ENCODE measurements at regions of chr4 and their contacts with region 1.

Region 1: GRCh38 chr4:108018040-108018883 is 28.6 kb downstream of the HADH start:
- DNase-seq: peak; percentile 75
- H3K4me3 ChIP-seq: no peak overlapping the region
- H3K27ac ChIP-seq: no peak overlapping the region
- H3K4me1 ChIP-seq: no peaks in the 10 kb centered on the region
- H3K27me3 ChIP-seq: no peaks in the 10 kb centered on the region
- CTCF ChIP-seq: peak; percentile 81
- POLR2A ChIP-seq: no peak

Region 2: GRCh38 chr4:107402291-107402690 is 616.0 kb before region 1 on chr4:
- CTCF ChIA-PET with region 1: no interaction called
- POLR2A ChIA-PET with region 1: no interaction called
- dilution Hi-C with region 1: no loop called
- intact Hi-C with region 1: no loop called
- DNase-seq: no peak
- H3K4me3 ChIP-seq: no peak overlapping the region
- H3K27ac ChIP-seq: no peak overlapping the region
- H3K4me1 ChIP-seq: no peaks in the 10 kb centered on the region
- H3K27me3 ChIP-seq: no peaks in the 10 kb centered on the region
- CTCF ChIP-seq: no peak
- POLR2A ChIP-seq: no peak

Region 3: GRCh38 chr4:108030332-108030731 is 12.1 kb after region 1 on chr4:
- CTCF ChIA-PET with region 1: interaction called, 39 read pairs
- POLR2A ChIA-PET with region 1: no interaction called
- dilution Hi-C with region 1: no loop called
- intact Hi-C with region 1: no loop called
- DNase-seq: peak; percentile 49
- H3K4me3 ChIP-seq: no peak overlapping the region
- H3K27ac ChIP-seq: no peak overlapping the region
- H3K4me1 ChIP-seq: no peaks in the 10 kb centered on the region
- H3K27me3 ChIP-seq: no peaks in the 10 kb centered on the region
- CTCF ChIP-seq: peak; percentile 17 to 55
- POLR2A ChIP-seq: no peak

Region 4: DNA sequence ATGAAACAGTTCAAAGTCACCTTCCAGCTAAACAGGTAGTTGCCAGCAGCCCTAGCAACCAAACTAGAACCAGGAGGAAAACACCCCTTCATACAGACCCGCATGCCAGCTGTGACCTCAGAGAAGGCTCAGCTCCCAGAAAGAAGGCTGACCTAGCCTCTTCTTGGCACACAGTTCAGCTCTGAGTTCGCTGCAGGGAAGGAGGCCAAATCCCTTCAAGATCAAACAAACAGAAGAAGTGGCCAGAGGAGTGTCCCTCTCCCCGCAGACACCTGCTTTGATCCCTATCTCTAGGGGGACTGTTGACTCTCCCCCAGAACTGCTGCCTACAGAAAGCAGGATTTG is 27.4 kb after region 1 on chr4:
- CTCF ChIA-PET with region 1: interaction called, 15 read pairs
- POLR2A ChIA-PET with region 1: no interaction called
- dilution Hi-C with region 1: no loop called
- intact Hi-C with region 1: no loop called
- DNase-seq: no peak
- H3K4me3 ChIP-seq: no peak overlapping the region
- H3K27ac ChIP-seq: no peak overlapping the region
- H3K4me1 ChIP-seq: peaks cover 5% of the 10 kb centered on the region
- H3K27me3 ChIP-seq: peaks cover 0 to 2% of the 10 kb centered on the region in 2 experiments
- CTCF ChIP-seq: no peak
- POLR2A ChIP-seq: no peak

Region 5: DNA sequence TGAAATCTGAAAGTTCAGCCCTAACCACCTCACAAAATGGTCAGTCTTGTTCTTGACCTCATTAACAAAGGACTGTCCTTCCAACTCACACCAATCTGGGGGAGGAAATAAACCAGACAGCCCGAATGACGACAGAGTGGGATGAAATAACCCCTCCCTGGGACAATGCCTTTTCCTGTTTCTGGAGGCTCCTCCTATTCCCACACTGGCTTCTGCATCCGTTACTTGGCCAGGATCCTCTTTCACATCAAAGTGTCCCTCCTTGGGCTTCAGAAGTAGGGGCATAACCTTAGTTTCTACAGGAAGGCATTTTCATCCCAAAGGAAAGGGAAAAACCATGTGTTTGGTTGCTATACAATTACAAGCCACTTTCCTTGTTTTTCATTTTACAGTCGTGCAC is 542.4 kb after region 1 on chr4:
- CTCF ChIA-PET with region 1: interaction called, 16 read pairs
- POLR2A ChIA-PET with region 1: no interaction called
- dilution Hi-C with region 1: no loop called
- intact Hi-C with region 1: no loop called
- DNase-seq: peak; percentile 38
- H3K4me3 ChIP-seq: no peak overlapping the region
- H3K27ac ChIP-seq: no peak overlapping the region
- H3K4me1 ChIP-seq: no peaks in the 10 kb centered on the region
- H3K27me3 ChIP-seq: peaks cover 0 to 3% of the 10 kb centered on the region in 2 experiments
- CTCF ChIP-seq: no peak
- POLR2A ChIP-seq: no peak

Region 6: GRCh38 chr4:108581083-108581482 is 562.8 kb after region 1 on chr4:
- CTCF ChIA-PET with region 1: interaction called, 10 read pairs
- POLR2A ChIA-PET with region 1: no interaction called
- dilution Hi-C with region 1: no loop called
- intact Hi-C with region 1: no loop called
- DNase-seq: no peak
- H3K4me3 ChIP-seq: no peak overlapping the region
- H3K27ac ChIP-seq: no peak overlapping the region
- H3K4me1 ChIP-seq: no peaks in the 10 kb centered on the region
- H3K27me3 ChIP-seq: no peaks in the 10 kb centered on the region
- CTCF ChIP-seq: no peak
- POLR2A ChIP-seq: no peak

Region 7: DNA sequence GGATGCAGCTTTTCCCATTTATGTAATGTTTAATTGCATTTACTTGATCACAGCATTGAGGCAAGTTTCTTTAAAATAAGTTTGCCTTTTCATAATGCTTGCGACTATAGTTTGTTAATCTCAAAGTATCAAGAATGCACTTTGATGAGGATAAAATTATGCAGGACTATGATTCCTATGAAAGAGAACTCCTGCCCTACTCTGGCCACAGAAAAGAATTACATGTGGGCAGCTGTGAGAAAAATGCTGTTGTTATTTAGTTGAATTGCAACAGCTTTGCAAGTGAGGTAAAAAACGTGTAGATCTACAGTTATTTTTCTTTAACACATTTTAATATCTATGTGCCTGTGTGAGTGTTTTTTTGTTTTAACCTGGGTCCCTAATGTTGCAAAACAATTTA is 619.6 kb after region 1 on chr4:
- CTCF ChIA-PET with region 1: interaction called, 19 read pairs
- POLR2A ChIA-PET with region 1: no interaction called
- dilution Hi-C with region 1: no loop called
- intact Hi-C with region 1: no loop called
- DNase-seq: no peak
- H3K4me3 ChIP-seq: no peak overlapping the region
- H3K27ac ChIP-seq: no peak overlapping the region
- H3K4me1 ChIP-seq: no peaks in the 10 kb centered on the region
- H3K27me3 ChIP-seq: no peaks in the 10 kb centered on the region
- CTCF ChIP-seq: no peak
- POLR2A ChIP-seq: no peak

Region 8: GRCh38 chr4:108834835-108835384 is 816.6 kb after region 1 on chr4:
- CTCF ChIA-PET with region 1: no interaction called
- POLR2A ChIA-PET with region 1: no interaction called
- dilution Hi-C with region 1: no loop called
- intact Hi-C with region 1: no loop called
- DNase-seq: peak; percentile 53
- H3K4me3 ChIP-seq: no peak overlapping the region
- H3K27ac ChIP-seq: no peak overlapping the region
- H3K4me1 ChIP-seq: no peaks in the 10 kb centered on the region
- H3K27me3 ChIP-seq: peaks cover 0 to 6% of the 10 kb centered on the region in 2 experiments
- CTCF ChIP-seq: peak; percentile 49 to 60
- POLR2A ChIP-seq: no peak

Measured in endothelial cell of umbilical vein (primary cell).